ENCODE measurements at regions of chr3 and their contacts with region 1.

Region 1: GRCh38 chr3:141875374-141875892 is 1.0 kb upstream of the ATP1B3 start:
- DNase-seq: peak; percentile 80
- H3K4me3 Mint-ChIP-seq: peak overlapping the region; percentile 87
- H3K27ac Mint-ChIP-seq: peak overlapping the region; percentile 95
- H3K4me1 Mint-ChIP-seq: peaks cover 28% of the 10 kb centered on the region
- H3K27me3 Mint-ChIP-seq: no peaks in the 10 kb centered on the region

Region 2: GRCh38 chr3:141487521-141488252 is 387.7 kb before region 1 on chr3:
- intact Hi-C with region 1: loop called (anchors 2 kb)
- DNase-seq: peak; percentile 86
- H3K4me3 Mint-ChIP-seq: peak overlapping the region; percentile 91
- H3K27ac Mint-ChIP-seq: peak overlapping the region; percentile 95
- H3K4me1 Mint-ChIP-seq: peaks cover 56% of the 10 kb centered on the region
- H3K27me3 Mint-ChIP-seq: no peaks in the 10 kb centered on the region

Region 3: GRCh38 chr3:141519587-141519986 is 355.8 kb before region 1 on chr3:
- intact Hi-C with region 1: no loop called
- DNase-seq: no peak
- H3K4me3 Mint-ChIP-seq: no peak overlapping the region
- H3K27ac Mint-ChIP-seq: no peak overlapping the region
- H3K4me1 Mint-ChIP-seq: peaks cover 27% of the 10 kb centered on the region
- H3K27me3 Mint-ChIP-seq: no peaks in the 10 kb centered on the region

Region 4: DNA sequence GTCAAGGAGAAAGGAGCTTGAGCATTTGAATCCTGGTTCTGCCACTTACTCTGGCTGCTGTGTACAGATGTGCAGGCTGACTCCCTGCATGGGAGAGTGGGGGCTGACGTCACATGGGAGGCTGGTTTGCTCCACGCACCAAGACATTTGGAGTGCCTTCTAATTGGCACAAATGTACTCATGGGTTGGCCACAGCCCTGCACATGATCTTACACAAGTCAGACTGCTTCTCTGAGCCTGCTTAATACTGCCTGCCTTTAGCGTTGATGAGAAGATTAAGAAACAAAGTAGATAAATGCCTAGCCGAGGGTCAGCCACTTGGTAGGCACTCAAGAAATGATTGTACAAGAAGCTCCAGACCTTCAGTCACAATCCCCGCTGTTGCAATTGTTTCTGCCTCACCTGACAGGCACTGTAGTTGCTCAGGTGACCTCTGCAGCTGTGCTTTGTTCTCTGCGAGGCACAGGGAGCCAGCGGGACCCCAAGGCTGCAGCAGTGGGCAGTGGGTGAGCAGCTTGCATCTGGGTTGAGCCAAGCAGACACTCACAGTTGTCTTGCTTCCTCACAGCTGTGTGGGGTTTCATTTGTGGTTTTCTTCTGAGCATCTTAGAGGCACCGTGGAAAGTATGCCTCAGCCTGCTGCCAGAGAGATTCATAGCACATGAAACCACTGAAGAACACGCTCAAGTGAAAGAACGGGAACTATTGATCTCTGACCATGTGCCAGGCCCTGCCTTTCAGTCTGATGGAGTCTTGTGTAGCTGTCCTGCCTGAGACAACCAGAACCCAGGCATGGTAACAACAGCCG is 79.1 kb before region 1 on chr3:
- intact Hi-C with region 1: loop called (anchors 1 kb)
- DNase-seq: peak; percentile 74
- H3K4me3 Mint-ChIP-seq: peak overlapping the region; percentile 81
- H3K27ac Mint-ChIP-seq: peak overlapping the region; percentile 99
- H3K4me1 Mint-ChIP-seq: peaks cover 44% of the 10 kb centered on the region
- H3K27me3 Mint-ChIP-seq: no peaks in the 10 kb centered on the region

Region 5: DNA sequence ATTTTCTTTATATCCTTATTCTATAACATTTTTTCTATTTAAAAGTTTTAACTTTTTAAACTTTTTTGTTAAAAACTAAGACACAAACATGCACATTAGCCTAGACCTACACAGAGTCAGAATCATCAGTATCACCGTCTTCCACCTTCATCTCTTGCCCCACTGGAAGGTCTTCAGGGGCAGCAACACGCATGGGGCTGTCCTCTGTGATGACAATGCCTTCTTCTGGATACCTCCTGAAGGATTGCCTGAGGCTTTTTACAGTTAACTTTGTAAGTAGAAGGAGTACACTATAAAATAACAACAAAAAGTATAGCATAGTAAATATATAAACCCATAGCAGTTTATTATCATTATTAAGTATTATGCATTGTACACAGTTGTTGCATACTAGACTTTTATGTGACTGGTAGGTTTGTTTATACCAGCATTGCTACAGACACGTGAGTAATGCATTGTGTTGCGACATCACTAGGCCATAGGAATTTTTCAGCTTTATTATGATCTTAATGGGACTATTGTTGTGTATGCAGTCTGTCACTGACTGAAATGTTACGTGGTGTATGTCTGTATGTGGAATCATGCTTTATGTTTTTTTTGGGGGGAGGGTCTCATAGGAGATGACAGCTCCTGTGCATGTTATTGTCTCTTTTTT is 19.2 kb after region 1 on chr3:
- intact Hi-C with region 1: loop called (anchors 2 kb)
- DNase-seq: no peak
- H3K4me3 Mint-ChIP-seq: no peak overlapping the region
- H3K27ac Mint-ChIP-seq: peak overlapping the region; percentile 10
- H3K4me1 Mint-ChIP-seq: peaks cover 35% of the 10 kb centered on the region
- H3K27me3 Mint-ChIP-seq: no peaks in the 10 kb centered on the region

Region 6: GRCh38 chr3:141913150-141913811 is 37.8 kb after region 1 on chr3:
- intact Hi-C with region 1: loop called (anchors 1 kb)
- DNase-seq: peak; percentile 30
- H3K4me3 Mint-ChIP-seq: no peak overlapping the region
- H3K27ac Mint-ChIP-seq: no peak overlapping the region
- H3K4me1 Mint-ChIP-seq: peaks cover 8% of the 10 kb centered on the region
- H3K27me3 Mint-ChIP-seq: no peaks in the 10 kb centered on the region

Region 7: GRCh38 chr3:141998669-141999290 is 123.3 kb after region 1 on chr3:
- intact Hi-C with region 1: loop called (anchors 10 kb)
- DNase-seq: no peak
- H3K4me3 Mint-ChIP-seq: no peak overlapping the region
- H3K27ac Mint-ChIP-seq: no peak overlapping the region
- H3K4me1 Mint-ChIP-seq: no peaks in the 10 kb centered on the region
- H3K27me3 Mint-ChIP-seq: no peaks in the 10 kb centered on the region

Region 8: GRCh38 chr3:142723968-142724681 is 848.7 kb after region 1 on chr3 and contains the start of gene TRPC1:
- intact Hi-C with region 1: loop called (anchors 5 kb)
- DNase-seq: peak; percentile 76
- H3K4me3 Mint-ChIP-seq: peak within 1 kb of the TSS; percentile 86
- H3K27ac Mint-ChIP-seq: peak within 1 kb of the TSS; percentile 80
- H3K4me1 Mint-ChIP-seq: peaks cover 4% of the 10 kb centered on the region
- H3K27me3 Mint-ChIP-seq: peaks cover 56% of the 10 kb centered on the region
- total RNA-seq, gene TRPC1: 1.4 and 2.5 TPM in 2 replicates